ENCODE measurements at regions of chr1 and their contacts with region 1.

Region 1: DNA sequence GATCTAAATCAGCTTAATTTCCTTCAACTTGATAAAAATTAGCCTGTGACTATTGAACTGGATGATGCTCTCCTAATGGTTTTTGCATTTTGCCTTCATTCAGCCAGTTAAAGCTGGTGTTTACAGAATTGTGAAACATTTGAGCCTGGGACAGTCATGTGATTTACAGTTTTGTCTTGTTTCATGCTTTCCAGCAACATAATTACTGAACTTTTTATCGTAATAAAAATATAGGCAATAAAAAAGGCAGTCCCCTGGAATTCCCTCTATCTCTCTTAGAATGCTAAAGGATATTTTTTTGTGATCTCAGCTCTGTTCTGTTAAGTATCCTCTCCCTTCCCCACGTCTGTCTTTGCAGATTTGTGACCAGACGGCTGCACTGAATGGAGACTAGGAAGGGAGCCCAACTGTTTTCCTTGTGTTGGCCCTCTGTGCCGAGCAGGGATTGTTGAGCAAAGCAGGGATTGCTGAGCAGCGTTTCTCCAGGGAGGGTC is 70.3 kb upstream of the RGL1 start:
- DNase-seq: peak; percentile 39 to 42
- H3K4me3 ChIP-seq: no peak overlapping the region
- H3K4me3 Mint-ChIP-seq: peak overlapping the region; percentile 25
- H3K27ac Mint-ChIP-seq: peak overlapping the region; percentile 68
- H3K4me1 ChIP-seq: peaks cover 82% of the 10 kb centered on the region
- H3K4me1 Mint-ChIP-seq: peaks cover 60% of the 10 kb centered on the region
- H3K27me3 ChIP-seq: no peaks in the 10 kb centered on the region
- H3K27me3 Mint-ChIP-seq: no peaks in the 10 kb centered on the region
- CTCF ChIP-seq: no peak

Region 2: DNA sequence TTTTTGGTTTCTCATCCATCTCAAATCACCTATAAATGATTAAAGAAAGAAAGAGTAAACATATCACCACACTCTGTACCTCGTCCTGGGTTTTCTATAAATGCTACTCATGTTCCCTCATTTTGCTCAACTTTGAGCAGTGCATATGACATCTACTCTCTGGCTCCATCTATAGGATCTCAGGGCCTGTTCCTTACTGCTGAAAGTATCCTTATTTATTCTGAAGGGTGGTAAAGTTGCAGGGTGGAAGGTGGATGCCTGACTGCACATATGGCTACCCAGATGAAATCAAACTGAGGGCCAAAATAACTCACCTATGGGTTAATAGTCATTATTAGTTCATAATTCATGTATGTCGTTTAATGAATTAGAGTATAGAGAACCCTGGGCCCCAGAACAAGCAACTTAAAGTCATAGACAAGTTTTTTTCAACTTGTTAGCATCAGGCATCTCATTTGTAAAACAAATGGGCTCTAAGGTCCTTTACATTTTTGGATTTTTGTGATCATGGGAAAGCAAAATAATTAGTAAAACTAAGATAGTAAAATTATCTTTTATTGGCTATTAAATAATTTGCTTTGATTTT is 190.9 kb before region 1 on chr1:
- CTCF ChIA-PET with region 1: no interaction called
- POLR2A ChIA-PET with region 1: no interaction called
- intact Hi-C with region 1: no loop called
- DNase-seq: peak in 1 of 2 experiments; percentile 62
- H3K4me3 ChIP-seq: no peak overlapping the region
- H3K4me3 Mint-ChIP-seq: no peak overlapping the region
- H3K27ac Mint-ChIP-seq: no peak overlapping the region
- H3K4me1 ChIP-seq: peaks cover 6% of the 10 kb centered on the region; the same call in 1 of the 2 replicates
- H3K4me1 Mint-ChIP-seq: peaks cover 13% of the 10 kb centered on the region
- H3K27me3 ChIP-seq: no peaks in the 10 kb centered on the region
- H3K27me3 Mint-ChIP-seq: no peaks in the 10 kb centered on the region
- CTCF ChIP-seq: peak; percentile 57 to 80

Region 3: DNA sequence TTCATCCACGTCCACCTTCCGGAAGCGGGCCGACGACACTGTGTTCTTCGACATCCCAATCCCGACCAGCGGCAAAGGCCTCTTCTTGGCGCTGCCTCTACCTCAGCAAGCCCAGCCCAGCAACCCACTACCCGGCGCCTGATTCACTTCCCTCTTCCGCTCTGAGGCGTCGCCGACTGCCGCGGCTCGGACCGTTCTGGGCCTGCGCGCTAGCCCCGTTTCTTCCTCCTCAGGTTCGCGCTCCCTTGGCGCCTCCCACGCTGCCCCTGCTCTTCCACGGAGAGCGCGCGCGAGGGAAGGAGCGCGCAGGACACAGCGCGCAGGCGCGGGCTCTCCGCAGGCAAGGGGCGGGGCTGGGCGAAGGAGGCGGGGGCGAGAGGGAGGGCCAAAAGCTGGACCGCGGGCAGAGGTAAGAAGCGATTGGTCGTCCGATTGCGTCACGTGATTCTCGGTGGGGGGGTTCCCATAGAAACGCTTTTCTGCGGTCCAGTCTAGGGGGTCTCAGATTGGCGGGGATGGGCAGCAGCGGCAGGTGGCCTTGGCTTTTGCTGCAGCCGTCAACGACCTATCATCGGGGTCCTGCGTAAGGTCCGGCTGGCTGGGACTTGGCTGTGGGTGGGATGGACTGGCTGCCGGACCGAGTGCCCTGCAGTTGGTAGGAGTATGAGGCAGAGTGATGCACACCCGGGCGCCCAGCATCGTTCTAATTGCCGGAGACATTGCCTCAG is 98.8 kb before region 1 on chr1 and contains the start of gene ARPC5:
- CTCF ChIA-PET with region 1: no interaction called
- POLR2A ChIA-PET with region 1: no interaction called
- intact Hi-C with region 1: loop called (anchors 1 kb)
- DNase-seq: peak; percentile 96 to 97
- H3K4me3 ChIP-seq: peak within 1 kb of the TSS; percentile 78
- H3K4me3 Mint-ChIP-seq: peak within 1 kb of the TSS; percentile 91
- H3K27ac Mint-ChIP-seq: peak within 1 kb of the TSS; percentile 90
- H3K4me1 ChIP-seq: peaks cover 41% of the 10 kb centered on the region
- H3K4me1 Mint-ChIP-seq: peaks cover 16% of the 10 kb centered on the region
- H3K27me3 ChIP-seq: no peaks in the 10 kb centered on the region
- H3K27me3 Mint-ChIP-seq: no peaks in the 10 kb centered on the region
- CTCF ChIP-seq: no peak
- total RNA-seq, gene ARPC5: 123 and 135 TPM in 2 replicates

Region 4: GRCh38 chr1:183699616-183700160 is 34.9 kb before region 1 on chr1:
- CTCF ChIA-PET with region 1: no interaction called
- POLR2A ChIA-PET with region 1: no interaction called
- intact Hi-C with region 1: loop called (anchors 1 kb)
- DNase-seq: peak; percentile 90 to 91
- H3K4me3 ChIP-seq: no peak overlapping the region
- H3K4me3 Mint-ChIP-seq: peak overlapping the region; percentile 70
- H3K27ac Mint-ChIP-seq: peak overlapping the region; percentile 93
- H3K4me1 ChIP-seq: peaks cover 61% of the 10 kb centered on the region
- H3K4me1 Mint-ChIP-seq: peaks cover 41% of the 10 kb centered on the region
- H3K27me3 ChIP-seq: no peaks in the 10 kb centered on the region
- H3K27me3 Mint-ChIP-seq: no peaks in the 10 kb centered on the region
- CTCF ChIP-seq: no peak

Region 5: DNA sequence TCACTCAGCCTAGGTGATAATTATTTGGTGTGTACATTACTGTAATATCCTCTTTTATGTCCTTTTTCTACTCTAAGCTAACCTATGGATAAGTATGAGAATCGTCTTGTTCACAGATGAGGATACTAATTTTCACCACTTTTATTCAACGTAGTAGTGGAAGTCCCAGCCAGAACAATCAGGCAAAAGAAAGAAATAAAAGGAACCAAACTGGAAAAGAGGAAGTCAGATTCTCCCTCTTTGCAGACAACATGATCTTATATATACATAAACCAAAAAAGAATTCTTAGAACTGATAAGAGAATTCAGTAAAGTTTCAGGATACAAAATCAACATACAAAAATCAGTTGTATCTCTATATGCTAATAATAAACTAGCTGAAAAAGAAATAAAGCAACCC is 57.7 kb after region 1 on chr1:
- CTCF ChIA-PET with region 1: no interaction called
- POLR2A ChIA-PET with region 1: no interaction called
- intact Hi-C with region 1: loop called (anchors 2 kb)
- DNase-seq: no peak
- H3K4me3 ChIP-seq: no peak overlapping the region
- H3K4me3 Mint-ChIP-seq: no peak overlapping the region
- H3K27ac Mint-ChIP-seq: no peak overlapping the region
- H3K4me1 ChIP-seq: peaks cover 15% of the 10 kb centered on the region
- H3K4me1 Mint-ChIP-seq: peaks cover 27% of the 10 kb centered on the region
- H3K27me3 ChIP-seq: no peaks in the 10 kb centered on the region
- H3K27me3 Mint-ChIP-seq: no peaks in the 10 kb centered on the region
- CTCF ChIP-seq: no peak

Region 6: DNA sequence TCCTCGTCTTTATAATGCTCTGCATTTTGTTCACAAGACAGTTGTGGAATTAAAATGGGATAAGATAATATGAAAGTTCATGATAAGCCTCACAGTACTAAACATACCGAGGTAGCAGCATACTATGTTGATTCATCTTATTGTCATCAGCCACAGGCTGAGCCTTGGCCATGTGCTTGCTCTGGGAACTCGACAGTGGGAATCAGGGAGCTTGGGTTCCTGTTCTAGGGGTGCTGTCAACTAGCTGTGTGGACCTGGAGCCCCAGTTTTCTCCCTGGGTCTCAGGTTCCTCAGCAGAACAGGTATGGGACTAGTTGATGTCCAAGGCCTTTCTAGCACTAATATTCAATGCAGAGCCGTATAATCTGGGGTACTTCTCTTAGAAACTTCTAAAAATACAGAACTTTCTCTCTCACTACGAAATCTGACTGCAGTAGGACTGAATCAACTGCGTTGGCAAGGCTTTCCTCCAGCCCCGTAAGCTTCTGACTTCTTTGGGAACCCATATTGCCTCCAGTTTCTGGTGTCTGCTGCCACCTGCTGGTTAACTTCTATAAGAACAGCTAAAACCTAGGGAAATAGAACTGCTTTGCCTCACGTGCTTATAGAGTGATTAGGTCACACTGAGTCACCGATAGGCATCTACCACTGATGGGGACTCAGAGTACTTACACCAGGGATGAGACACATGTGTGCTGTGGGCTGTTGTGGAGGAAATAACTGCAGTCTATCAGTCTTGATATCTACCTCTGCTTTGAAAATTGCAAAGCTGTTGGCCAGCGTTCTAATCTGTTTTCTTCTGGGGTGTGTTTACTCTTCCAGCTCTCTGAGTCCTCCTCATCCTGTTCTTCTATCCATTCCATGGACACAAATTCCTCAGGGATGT is 181.3 kb after region 1 on chr1:
- CTCF ChIA-PET with region 1: interaction called, 8 read pairs
- POLR2A ChIA-PET with region 1: no interaction called
- intact Hi-C with region 1: loop called (anchors 2 kb)
- DNase-seq: peak; percentile 75 to 82
- H3K4me3 ChIP-seq: no peak overlapping the region
- H3K4me3 Mint-ChIP-seq: no peak overlapping the region
- H3K27ac Mint-ChIP-seq: peak overlapping the region; percentile 71
- H3K4me1 ChIP-seq: peaks cover 7% of the 10 kb centered on the region
- H3K4me1 Mint-ChIP-seq: peaks cover 13% of the 10 kb centered on the region
- H3K27me3 ChIP-seq: no peaks in the 10 kb centered on the region
- H3K27me3 Mint-ChIP-seq: no peaks in the 10 kb centered on the region
- CTCF ChIP-seq: peak; percentile 78 to 89

Measured in Caco-2 (cell line).